ENCODE measurements at regions of chr7 and their contacts with region 1.

Region 1: DNA sequence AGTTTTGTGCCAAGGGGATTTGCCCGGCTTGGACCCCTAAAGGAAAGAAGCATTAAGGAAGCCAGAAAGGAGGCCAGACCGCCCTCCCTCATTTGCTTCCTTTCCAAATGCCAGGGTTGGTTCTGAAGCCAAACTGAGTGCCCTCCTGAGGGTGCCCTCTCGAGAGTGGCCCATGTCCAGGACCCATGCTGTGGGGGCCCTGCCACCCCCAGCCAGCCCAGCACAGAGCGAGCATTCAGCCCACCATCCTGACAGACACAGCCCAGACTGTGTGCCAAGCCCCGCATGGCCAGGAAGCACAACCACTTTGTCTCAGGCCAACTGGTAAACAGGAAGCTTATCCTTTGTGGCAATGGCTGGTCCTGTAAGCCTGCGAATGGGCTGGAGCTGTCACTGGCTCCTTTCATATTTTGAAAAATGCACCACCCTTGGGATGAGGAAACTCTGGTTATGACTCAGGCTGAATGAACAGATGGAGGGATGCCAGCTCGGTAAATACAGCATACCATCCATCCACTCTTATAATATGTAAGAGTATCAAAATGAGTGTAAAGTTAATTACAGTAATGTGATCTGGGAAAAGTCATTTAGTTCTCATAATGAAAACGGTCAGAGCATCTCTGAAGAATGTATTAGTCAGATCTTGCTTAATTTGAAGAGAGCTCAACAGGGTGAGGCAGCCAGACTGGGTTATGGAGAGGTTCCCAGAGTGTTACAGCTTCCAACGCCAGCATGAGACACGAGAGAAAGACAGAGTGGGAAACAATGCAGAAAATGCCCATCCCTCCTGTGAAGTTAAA is 65.0 kb downstream of the STK17A start:
- DNase-seq: peak; percentile 98
- H3K4me3 Mint-ChIP-seq: peak overlapping the region; percentile 38
- H3K27ac Mint-ChIP-seq: peak overlapping the region; percentile 89
- H3K4me1 Mint-ChIP-seq: peaks cover 54% of the 10 kb centered on the region
- H3K27me3 Mint-ChIP-seq: no peaks in the 10 kb centered on the region
- CTCF ChIP-seq: no peak

Region 2: DNA sequence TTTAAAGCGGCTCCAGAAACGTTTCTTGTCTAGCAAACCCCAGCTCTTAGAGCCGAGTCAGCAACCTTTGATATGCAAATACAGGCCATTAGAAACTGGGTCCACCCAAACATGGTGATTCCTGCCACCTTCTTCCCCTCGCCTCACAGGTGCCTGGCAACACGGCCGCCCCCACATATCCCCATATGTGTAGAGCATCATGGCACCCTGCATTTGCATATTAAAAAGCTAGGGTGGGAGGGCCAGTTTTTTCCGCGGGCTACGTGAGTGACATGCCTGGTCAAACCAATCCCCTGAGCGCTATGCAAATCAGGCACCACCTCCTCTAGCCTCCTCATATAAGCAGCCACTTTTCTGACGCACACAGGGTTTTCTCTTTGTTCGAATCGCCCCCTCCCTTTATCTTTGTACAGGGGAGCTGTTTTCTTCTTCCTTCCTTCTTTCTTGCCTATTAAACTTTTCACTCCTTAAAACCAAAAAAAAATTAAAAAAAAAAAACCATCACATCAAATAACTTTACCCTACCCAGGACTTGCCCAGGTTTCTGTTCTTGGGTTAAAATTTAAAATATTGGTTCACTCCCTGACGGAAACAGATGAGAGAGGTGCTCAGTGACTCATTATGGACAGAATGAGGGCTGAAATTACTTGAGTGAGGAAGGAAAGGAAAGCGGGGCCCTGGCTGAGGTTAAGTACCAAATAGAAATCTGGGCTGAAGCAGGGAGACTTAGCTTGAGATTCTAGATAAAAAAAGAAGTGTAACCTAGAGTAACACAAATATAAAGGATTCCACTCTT is 21.6 kb after region 1 on chr7:
- CTCF ChIA-PET with region 1: interaction called, 3 read pairs
- POLR2A ChIA-PET with region 1: interaction called, 11 read pairs
- intact Hi-C with region 1: no loop called
- DNase-seq: no peak
- H3K4me3 Mint-ChIP-seq: no peak overlapping the region
- H3K27ac Mint-ChIP-seq: peak overlapping the region; percentile 83
- H3K4me1 Mint-ChIP-seq: peaks cover 11% of the 10 kb centered on the region
- H3K27me3 Mint-ChIP-seq: no peaks in the 10 kb centered on the region
- CTCF ChIP-seq: no peak

Region 3: GRCh38 chr7:43693687-43694398 is 46.0 kb after region 1 on chr7:
- CTCF ChIA-PET with region 1: interaction called, 12 read pairs
- POLR2A ChIA-PET with region 1: interaction called, 11 read pairs
- intact Hi-C with region 1: no loop called
- DNase-seq: peak; percentile 43
- H3K4me3 Mint-ChIP-seq: no peak overlapping the region
- H3K27ac Mint-ChIP-seq: no peak overlapping the region
- H3K4me1 Mint-ChIP-seq: peaks cover 4% of the 10 kb centered on the region
- H3K27me3 Mint-ChIP-seq: no peaks in the 10 kb centered on the region
- CTCF ChIP-seq: no peak

Region 4: GRCh38 chr7:43758029-43758821 is 110.4 kb after region 1 on chr7 and contains the start of gene BLVRA:
- CTCF ChIA-PET with region 1: no interaction called
- POLR2A ChIA-PET with region 1: no interaction called
- intact Hi-C with region 1: no loop called
- DNase-seq: peak; percentile 50
- H3K4me3 Mint-ChIP-seq: peak within 1 kb of the TSS; percentile 72
- H3K27ac Mint-ChIP-seq: peak within 1 kb of the TSS; percentile 83
- H3K4me1 Mint-ChIP-seq: peaks cover 41% of the 10 kb centered on the region
- H3K27me3 Mint-ChIP-seq: no peaks in the 10 kb centered on the region
- CTCF ChIP-seq: no peak
- total RNA-seq, gene BLVRA: 41.2 and 46.0 TPM in 2 replicates

Region 5: DNA sequence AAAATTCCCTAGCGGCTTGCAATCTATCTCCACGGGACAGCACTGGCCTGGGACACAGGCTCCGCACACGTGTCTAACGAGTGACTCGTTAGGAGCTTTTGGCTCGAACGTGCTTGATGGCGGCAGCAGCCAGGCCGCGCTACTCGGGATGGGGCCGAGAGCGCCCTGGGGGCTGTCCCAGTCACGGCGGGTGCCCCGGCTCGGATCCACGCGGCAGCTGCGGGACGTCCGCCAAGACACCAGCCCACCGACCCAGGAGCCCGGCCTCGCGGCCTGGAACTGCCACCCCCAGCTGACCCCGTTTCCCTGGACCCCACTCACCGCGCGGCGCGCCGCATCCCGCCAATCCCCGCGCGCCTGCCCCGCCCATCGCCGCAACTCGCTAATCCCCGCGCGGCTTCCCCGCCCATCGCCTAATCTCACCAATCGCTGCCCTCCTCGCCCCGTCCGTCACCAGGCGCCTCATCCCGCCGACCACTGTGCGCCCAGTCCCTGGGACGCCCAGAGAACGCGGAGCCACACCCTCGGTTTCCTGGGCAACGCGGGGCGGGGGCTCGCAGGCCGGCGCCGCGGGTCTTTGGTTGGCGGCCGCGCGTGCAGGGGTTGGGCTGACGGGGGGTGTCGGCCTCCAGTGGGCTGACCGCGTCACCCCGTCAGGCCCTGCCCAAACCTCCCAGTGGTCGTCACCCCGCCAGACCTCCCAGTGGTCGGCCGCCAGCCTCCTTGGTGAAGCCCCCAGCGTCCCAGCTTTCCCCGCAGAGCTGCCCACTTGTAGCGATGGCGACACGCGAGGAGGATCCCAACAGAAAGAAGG is 475.5 kb after region 1 on chr7 and contains the start of gene POLD2:
- CTCF ChIA-PET with region 1: no interaction called
- POLR2A ChIA-PET with region 1: no interaction called
- intact Hi-C with region 1: no loop called
- DNase-seq: peak; percentile 95
- H3K4me3 Mint-ChIP-seq: peak within 1 kb of the TSS; percentile 77
- H3K27ac Mint-ChIP-seq: peak within 1 kb of the TSS; percentile 86
- H3K4me1 Mint-ChIP-seq: peaks cover 27% of the 10 kb centered on the region
- H3K27me3 Mint-ChIP-seq: no peaks in the 10 kb centered on the region
- CTCF ChIP-seq: no peak
- total RNA-seq, gene POLD2: 118 and 179 TPM in 2 replicates